CD4-positive, alpha-beta T cell (primary cell): ENCODE measurements at regions of chr6 and their contacts with region 1.

Region 1: GRCh38 chr6:26216356-26216885 is 129.2 kb downstream of the HFE start:
- DNase-seq: peak; percentile 52 to 98 (median 71)
- ATAC-seq: peak; percentile 80
- H3K4me3 ChIP-seq: peak overlapping the region; percentile 76
- H3K4me3 Mint-ChIP-seq: no peak overlapping the region
- H3K27ac ChIP-seq: peak overlapping the region; percentile 87 to 88
- H3K27ac Mint-ChIP-seq: no peak overlapping the region
- H3K4me1 ChIP-seq: peaks cover 33% of the 10 kb centered on the region
- H3K4me1 Mint-ChIP-seq: no peaks in the 10 kb centered on the region
- H3K27me3 ChIP-seq: no peaks in the 10 kb centered on the region
- H3K27me3 Mint-ChIP-seq: no peaks in the 10 kb centered on the region
- CTCF ChIP-seq: no peak

Region 2: GRCh38 chr6:26045065-26045927 is 171.1 kb before region 1 on chr6:
- CTCF ChIA-PET with region 1: interaction called, 3 read pairs
- POLR2A ChIA-PET with region 1: interaction called, 52 read pairs
- intact Hi-C with region 1: no loop called
- DNase-seq: peak; percentile 49 to 96 (median 74)
- ATAC-seq: peak; percentile 55
- H3K4me3 ChIP-seq: peak overlapping the region; percentile 70
- H3K4me3 Mint-ChIP-seq: peak overlapping the region; percentile 97
- H3K27ac ChIP-seq: peak overlapping the region; percentile 71 to 91
- H3K27ac Mint-ChIP-seq: peak overlapping the region; percentile 94
- H3K4me1 ChIP-seq: peaks cover 21% of the 10 kb centered on the region
- H3K4me1 Mint-ChIP-seq: peaks cover 28% of the 10 kb centered on the region
- H3K27me3 ChIP-seq: no peaks in the 10 kb centered on the region
- H3K27me3 Mint-ChIP-seq: no peaks in the 10 kb centered on the region
- CTCF ChIP-seq: no peak

Region 3: GRCh38 chr6:26163427-26164119 is 52.8 kb before region 1 on chr6:
- CTCF ChIA-PET with region 1: interaction called, 3 read pairs
- POLR2A ChIA-PET with region 1: interaction called, 438 read pairs
- intact Hi-C with region 1: no loop called
- DNase-seq: no peak
- ATAC-seq: no peak
- H3K4me3 ChIP-seq: no peak overlapping the region
- H3K4me3 Mint-ChIP-seq: peak overlapping the region; percentile 75
- H3K27ac ChIP-seq: no peak overlapping the region
- H3K27ac Mint-ChIP-seq: peak overlapping the region; percentile 80
- H3K4me1 ChIP-seq: peaks cover 57% of the 10 kb centered on the region
- H3K4me1 Mint-ChIP-seq: peaks cover 47% of the 10 kb centered on the region
- H3K27me3 ChIP-seq: no peaks in the 10 kb centered on the region
- H3K27me3 Mint-ChIP-seq: no peaks in the 10 kb centered on the region
- CTCF ChIP-seq: no peak

Region 4: GRCh38 chr6:26240154-26241032 is 24.0 kb after region 1 on chr6:
- CTCF ChIA-PET with region 1: interaction called, 3 read pairs
- POLR2A ChIA-PET with region 1: interaction called, 754 read pairs
- intact Hi-C with region 1: loop called in 1 of 2 experiments (anchors 2 kb)
- DNase-seq: peak; percentile 45 to 96 (median 64)
- ATAC-seq: peak; percentile 76
- H3K4me3 ChIP-seq: peak overlapping the region; percentile 66
- H3K4me3 Mint-ChIP-seq: peak overlapping the region; percentile 84
- H3K27ac ChIP-seq: peak overlapping the region; percentile 78 to 90
- H3K27ac Mint-ChIP-seq: peak overlapping the region; percentile 96
- H3K4me1 ChIP-seq: peaks cover 17% of the 10 kb centered on the region
- H3K4me1 Mint-ChIP-seq: peaks cover 23% of the 10 kb centered on the region
- H3K27me3 ChIP-seq: no peaks in the 10 kb centered on the region
- H3K27me3 Mint-ChIP-seq: no peaks in the 10 kb centered on the region
- CTCF ChIP-seq: no peak

Region 5: DNA sequence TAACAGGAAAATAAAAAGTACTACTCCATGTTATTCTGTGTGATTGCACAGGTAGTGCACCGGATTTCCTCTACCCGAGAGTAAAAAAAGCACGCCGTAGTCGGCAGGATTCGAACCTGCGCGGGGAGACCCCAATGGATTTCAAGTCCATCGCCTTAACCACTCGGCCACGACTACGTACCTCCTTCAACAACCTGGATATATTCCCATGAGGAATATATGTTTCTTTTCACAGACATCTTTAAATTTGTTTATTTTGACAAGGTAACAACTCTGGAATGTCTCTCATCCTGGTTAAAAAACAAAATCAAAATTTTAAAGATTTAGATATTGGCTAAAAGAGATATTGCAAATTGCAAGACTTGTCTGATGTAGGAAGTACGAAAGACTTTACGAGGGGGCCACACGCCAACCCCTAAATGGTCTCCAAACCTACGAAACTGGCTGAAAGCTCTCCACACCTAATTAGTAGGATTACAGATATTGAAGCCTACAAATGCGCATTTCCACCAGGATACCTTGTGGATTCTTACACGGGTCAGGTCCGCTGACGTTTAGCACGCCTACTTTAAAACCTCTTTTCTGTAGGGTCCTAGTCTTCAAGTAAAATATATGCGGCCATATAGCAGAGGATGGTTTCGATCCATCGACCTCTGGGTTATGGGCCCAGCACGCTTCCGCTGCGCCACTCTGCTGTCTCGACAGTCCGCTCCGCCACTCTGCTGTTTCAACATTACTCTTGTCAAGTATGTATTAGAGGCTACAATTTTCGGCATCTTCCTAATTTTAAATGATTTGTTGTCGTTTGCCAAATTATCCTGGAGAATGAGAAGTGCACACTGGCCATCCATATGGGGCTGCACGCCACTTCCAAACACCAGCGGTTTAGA is 96.3 kb after region 1 on chr6:
- CTCF ChIA-PET with region 1: interaction called, 3 read pairs
- POLR2A ChIA-PET with region 1: interaction called, 14 read pairs
- intact Hi-C with region 1: no loop called
- DNase-seq: peak; percentile 73 to 92 (median 82)
- ATAC-seq: peak; percentile 54
- H3K4me3 ChIP-seq: peak overlapping the region; percentile 69
- H3K4me3 Mint-ChIP-seq: peak overlapping the region; percentile 92
- H3K27ac ChIP-seq: peak overlapping the region in 1 of 2 donors; percentile 24
- H3K27ac Mint-ChIP-seq: peak overlapping the region; percentile 93
- H3K4me1 ChIP-seq: peaks cover 7% of the 10 kb centered on the region
- H3K4me1 Mint-ChIP-seq: peaks cover 44% of the 10 kb centered on the region
- H3K27me3 ChIP-seq: no peaks in the 10 kb centered on the region
- H3K27me3 Mint-ChIP-seq: peaks cover 30% of the 10 kb centered on the region
- CTCF ChIP-seq: no peak

Region 6: GRCh38 chr6:26596579-26597388 is 380.4 kb after region 1 on chr6 and contains the start of gene ABT1:
- CTCF ChIA-PET with region 1: interaction called, 3 read pairs
- POLR2A ChIA-PET with region 1: interaction called, 10 read pairs
- intact Hi-C with region 1: no loop called
- DNase-seq: peak; percentile 92 to 98 (median 96)
- ATAC-seq: peak; percentile 79
- H3K4me3 ChIP-seq: peak within 1 kb of the TSS; percentile 98
- H3K4me3 Mint-ChIP-seq: no peak within 1 kb of the TSS
- H3K27ac ChIP-seq: peak within 1 kb of the TSS; percentile 86 to 95
- H3K27ac Mint-ChIP-seq: no peak within 1 kb of the TSS
- H3K4me1 ChIP-seq: peaks cover 31% of the 10 kb centered on the region
- H3K4me1 Mint-ChIP-seq: peaks cover 23% of the 10 kb centered on the region
- H3K27me3 ChIP-seq: peaks cover 8 to 28% of the 10 kb centered on the region in 2 experiments
- H3K27me3 Mint-ChIP-seq: peaks cover 30% of the 10 kb centered on the region
- CTCF ChIP-seq: no peak
- total RNA-seq, gene ABT1: 39.8 to 40.4 TPM

Region 7: DNA sequence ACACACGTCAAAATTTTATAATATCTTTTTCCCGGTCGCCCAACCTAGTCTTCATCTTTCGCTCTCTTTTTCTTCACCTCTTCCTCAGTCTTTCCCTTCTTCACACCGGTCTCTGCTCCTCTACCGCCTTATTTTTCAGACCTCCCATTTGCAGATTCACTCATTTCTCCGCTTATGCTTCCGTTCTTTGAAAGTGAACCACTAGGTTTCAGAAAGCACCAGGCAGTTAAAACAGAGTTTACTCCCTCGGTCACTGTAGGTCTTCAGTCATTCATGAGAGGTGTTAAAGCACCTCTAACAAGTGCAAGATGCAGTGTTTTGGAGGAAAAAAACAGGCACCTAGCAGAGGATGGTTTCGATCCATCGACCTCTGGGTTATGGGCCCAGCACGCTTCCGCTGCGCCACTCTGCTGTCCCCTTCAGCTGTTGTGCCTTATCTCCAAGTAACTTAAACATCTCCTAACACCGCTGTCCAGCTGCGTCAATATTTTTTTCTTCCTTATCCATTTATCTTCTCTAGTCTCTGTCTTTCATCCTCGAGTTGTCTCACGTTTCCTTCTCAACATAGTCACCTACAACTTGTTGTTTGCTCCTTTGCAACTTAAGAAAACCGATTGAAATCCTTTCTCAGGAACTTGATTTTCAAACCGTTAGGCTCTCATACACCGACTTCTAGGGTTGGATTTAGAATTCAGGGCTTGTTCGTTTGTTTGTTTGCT is 1376.2 kb after region 1 on chr6:
- CTCF ChIA-PET with region 1: no interaction called
- POLR2A ChIA-PET with region 1: no interaction called
- intact Hi-C with region 1: no loop called
- DNase-seq: peak in 4 of 14 experiments; percentile 8 to 37 (median 32)
- ATAC-seq: peak; percentile 34
- H3K4me3 ChIP-seq: no peak overlapping the region
- H3K4me3 Mint-ChIP-seq: no peak overlapping the region
- H3K27ac ChIP-seq: no peak overlapping the region
- H3K27ac Mint-ChIP-seq: no peak overlapping the region
- H3K4me1 ChIP-seq: peaks cover 11% of the 10 kb centered on the region
- H3K4me1 Mint-ChIP-seq: no peaks in the 10 kb centered on the region
- H3K27me3 ChIP-seq: peaks cover 60 to 83% of the 10 kb centered on the region in 2 experiments
- H3K27me3 Mint-ChIP-seq: peaks cover 51% of the 10 kb centered on the region
- CTCF ChIP-seq: no peak

Region 8: GRCh38 chr6:27864906-27865849 is 1648.8 kb after region 1 on chr6:
- CTCF ChIA-PET with region 1: no interaction called
- POLR2A ChIA-PET with region 1: interaction called, 40 read pairs
- intact Hi-C with region 1: no loop called
- DNase-seq: peak in 13 of 14 experiments; percentile 35 to 97 (median 61)
- ATAC-seq: peak; percentile 83
- H3K4me3 ChIP-seq: peak overlapping the region; percentile 59
- H3K4me3 Mint-ChIP-seq: peak overlapping the region; percentile 100
- H3K27ac ChIP-seq: peak overlapping the region; percentile 54 to 78
- H3K27ac Mint-ChIP-seq: peak overlapping the region; percentile 93
- H3K4me1 ChIP-seq: peaks cover 38% of the 10 kb centered on the region
- H3K4me1 Mint-ChIP-seq: peaks cover 41% of the 10 kb centered on the region
- H3K27me3 ChIP-seq: no peaks in the 10 kb centered on the region
- H3K27me3 Mint-ChIP-seq: peaks cover 3% of the 10 kb centered on the region
- CTCF ChIP-seq: no peak